ENCODE measurements at regions of chr12 and their contacts with region 1.

Region 1: GRCh38 chr12:12562585-12563261 is at the start of gene DUSP16:
- DNase-seq: peak; percentile 93 to 97 (median 97)
- ATAC-seq: peak; percentile 98
- H3K4me3 ChIP-seq: peak within 1 kb of the TSS; percentile 96
- H3K27ac ChIP-seq: peak within 1 kb of the TSS; percentile 100
- H3K4me1 ChIP-seq: peaks cover 5% of the 10 kb centered on the region
- H3K27me3 ChIP-seq: no peaks in the 10 kb centered on the region
- total RNA-seq, gene DUSP16: 11.1 to 17.2 (median 14.3) TPM

Region 2: DNA sequence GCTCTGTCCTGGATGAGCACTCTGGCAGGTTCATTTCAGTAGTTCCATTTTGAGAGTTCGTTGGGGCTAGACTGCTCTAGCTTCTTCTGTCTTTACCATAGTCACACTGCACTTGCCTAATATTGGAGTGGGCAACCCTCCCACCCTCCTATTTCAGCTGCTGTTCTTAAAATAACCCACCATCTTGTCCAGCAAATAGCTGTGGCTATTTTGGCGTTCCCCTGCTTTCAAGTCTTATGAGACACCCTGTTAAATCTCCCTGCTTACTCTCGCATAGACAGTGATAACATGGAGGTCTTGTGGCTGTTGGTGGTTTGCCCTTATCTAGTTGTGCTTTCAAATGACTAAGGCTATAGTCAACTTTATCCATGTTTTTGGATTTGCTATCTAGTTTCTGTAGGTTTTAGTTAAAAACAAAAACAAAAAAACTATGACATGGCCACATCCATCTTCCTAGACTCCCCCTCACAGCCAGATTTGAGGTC is 361.4 kb before region 1 on chr12:
- intact Hi-C with region 1: no loop called
- DNase-seq: no peak
- ATAC-seq: peak; percentile 36 to 64
- H3K4me3 ChIP-seq: no peak overlapping the region
- H3K27ac ChIP-seq: peak overlapping the region; percentile 36
- H3K4me1 ChIP-seq: peaks cover 1% of the 10 kb centered on the region
- H3K27me3 ChIP-seq: no peaks in the 10 kb centered on the region

Region 3: DNA sequence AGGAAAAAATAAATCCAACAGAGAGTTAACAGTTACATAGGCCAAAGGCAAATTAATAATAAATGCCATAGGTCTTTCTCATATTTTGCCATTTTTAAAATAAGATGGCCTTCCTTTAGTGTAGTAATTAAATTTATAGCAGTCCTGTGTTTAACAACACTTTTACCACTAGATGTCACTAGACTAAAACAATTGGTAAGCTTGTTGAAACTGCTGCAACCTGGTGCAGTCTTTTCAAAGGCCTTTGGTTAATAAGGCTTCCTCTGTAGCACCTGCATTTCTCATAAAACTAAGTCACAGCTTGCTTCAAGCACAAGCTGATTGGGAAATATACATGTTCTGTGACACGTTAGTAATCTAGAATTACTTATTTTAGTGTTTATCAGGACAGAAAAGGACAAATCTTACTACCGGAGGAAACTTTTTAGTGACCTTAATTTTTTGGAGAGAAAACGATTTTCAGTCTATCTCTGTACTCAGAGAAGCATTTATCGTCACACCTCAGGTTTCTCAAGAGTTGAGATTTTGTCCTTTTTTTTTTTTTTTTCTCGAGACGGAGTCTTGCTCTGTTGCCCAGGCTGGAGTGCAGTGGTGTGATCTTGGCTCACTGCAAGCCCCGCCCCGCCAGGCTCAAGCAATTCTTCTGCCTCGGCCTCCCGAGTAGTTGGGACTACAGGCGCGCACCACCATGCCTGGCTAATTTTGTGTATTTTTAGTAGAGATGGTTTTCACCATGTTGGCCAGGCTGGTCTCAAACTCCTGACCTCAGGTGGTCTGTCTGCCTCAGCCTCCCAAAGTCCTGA is 185.9 kb before region 1 on chr12:
- intact Hi-C with region 1: loop called in 3 of 4 experiments (anchors 2 to 5 kb)
- DNase-seq: no peak
- ATAC-seq: peak; percentile 79
- H3K4me3 ChIP-seq: no peak overlapping the region
- H3K27ac ChIP-seq: no peak overlapping the region
- H3K4me1 ChIP-seq: no peaks in the 10 kb centered on the region
- H3K27me3 ChIP-seq: no peaks in the 10 kb centered on the region

Region 4: GRCh38 chr12:12398026-12398859 is 164.5 kb before region 1 on chr12:
- intact Hi-C with region 1: loop called in 1 of 4 experiments (anchors 10 kb)
- DNase-seq: peak; percentile 66 to 79 (median 75)
- ATAC-seq: peak; percentile 94 to 96
- H3K4me3 ChIP-seq: no peak overlapping the region
- H3K27ac ChIP-seq: peak overlapping the region; percentile 20
- H3K4me1 ChIP-seq: no peaks in the 10 kb centered on the region
- H3K27me3 ChIP-seq: no peaks in the 10 kb centered on the region

Region 5: DNA sequence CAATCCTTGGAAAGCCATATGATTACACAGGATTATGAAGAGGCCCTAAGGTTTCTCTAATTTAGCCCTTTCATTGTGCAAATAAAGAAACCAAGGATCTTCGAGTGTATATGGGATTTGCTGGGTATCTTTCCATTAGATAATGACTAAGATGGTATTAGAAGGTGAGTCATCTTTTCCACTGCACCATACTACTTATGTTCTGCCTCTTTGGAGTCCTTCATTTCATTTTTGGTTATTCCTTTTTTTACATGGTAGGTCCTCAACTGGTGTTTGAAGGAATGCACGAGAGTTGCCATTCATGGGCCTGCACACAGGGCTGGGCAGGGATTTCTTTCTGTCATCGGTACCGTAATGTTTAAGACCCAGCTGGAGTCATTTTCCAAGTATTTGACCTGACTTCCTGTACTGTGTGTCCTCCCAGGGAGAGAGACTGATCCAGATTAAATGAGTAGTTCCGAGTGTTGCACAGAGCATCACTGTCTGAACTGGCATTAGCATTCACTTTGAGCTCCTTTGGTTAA is 120.1 kb before region 1 on chr12:
- intact Hi-C with region 1: loop called in 1 of 4 experiments (anchors 5 kb)
- DNase-seq: no peak
- ATAC-seq: peak; percentile 67 to 86
- H3K4me3 ChIP-seq: no peak overlapping the region
- H3K27ac ChIP-seq: peak overlapping the region; percentile 56
- H3K4me1 ChIP-seq: peaks cover 16% of the 10 kb centered on the region
- H3K27me3 ChIP-seq: no peaks in the 10 kb centered on the region

Region 6: GRCh38 chr12:12486661-12487240 is 76.0 kb before region 1 on chr12:
- intact Hi-C with region 1: no loop called
- DNase-seq: no peak
- ATAC-seq: no peak
- H3K4me3 ChIP-seq: no peak overlapping the region
- H3K27ac ChIP-seq: no peak overlapping the region
- H3K4me1 ChIP-seq: no peaks in the 10 kb centered on the region
- H3K27me3 ChIP-seq: no peaks in the 10 kb centered on the region

Region 7: GRCh38 chr12:12505544-12506495 is 56.9 kb before region 1 on chr12:
- intact Hi-C with region 1: loop called in 1 of 4 experiments (anchors 5 kb)
- DNase-seq: no peak
- ATAC-seq: peak; percentile 78 to 89
- H3K4me3 ChIP-seq: peak overlapping the region; percentile 3
- H3K27ac ChIP-seq: peak overlapping the region; percentile 30
- H3K4me1 ChIP-seq: peaks cover 4% of the 10 kb centered on the region
- H3K27me3 ChIP-seq: no peaks in the 10 kb centered on the region

Region 8: DNA sequence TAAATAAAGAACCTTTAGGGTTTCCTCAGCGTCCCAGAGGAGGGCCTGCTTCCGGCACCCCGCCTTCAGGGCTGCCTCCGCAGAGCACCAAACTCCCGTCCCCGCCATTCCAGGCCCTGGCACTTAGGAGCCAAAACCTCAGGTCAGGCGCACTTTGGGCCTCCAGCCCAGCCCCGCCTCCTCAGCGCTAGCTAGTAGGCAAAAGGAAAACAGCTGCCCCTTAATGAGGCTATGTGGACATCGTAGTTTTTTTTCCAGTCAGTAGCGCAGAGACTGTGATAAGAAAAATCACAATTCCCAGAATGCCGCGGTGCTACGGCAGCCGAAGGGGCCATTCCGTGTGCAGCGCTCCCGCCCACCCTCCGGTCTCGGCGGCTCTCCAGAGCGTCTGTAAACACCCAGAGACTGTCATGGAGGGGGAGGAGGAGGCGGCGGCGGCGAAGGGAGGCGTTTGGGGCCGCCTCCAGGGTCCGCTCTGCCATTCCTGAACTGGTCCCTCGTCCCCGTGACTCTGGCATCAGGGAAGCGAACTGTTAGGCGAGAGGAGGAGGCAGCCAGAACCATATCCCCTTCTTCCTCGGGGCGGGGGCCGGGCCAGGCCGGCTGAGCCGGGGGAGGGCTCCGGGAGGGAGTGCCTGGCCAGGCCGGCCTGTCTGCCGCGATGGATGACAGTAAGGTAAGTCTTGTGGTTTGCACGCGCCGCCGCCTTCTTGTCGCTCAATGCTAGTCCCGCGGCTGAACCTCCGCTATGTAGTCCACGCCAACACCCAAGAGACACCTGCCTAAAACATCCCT is 49.0 kb after region 1 on chr12 and contains the start of gene CREBL2:
- intact Hi-C with region 1: no loop called
- DNase-seq: peak; percentile 97 to 99 (median 99)
- ATAC-seq: peak; percentile 97 to 98
- H3K4me3 ChIP-seq: peak within 1 kb of the TSS; percentile 65
- H3K27ac ChIP-seq: peak within 1 kb of the TSS; percentile 90
- H3K4me1 ChIP-seq: peaks cover 3% of the 10 kb centered on the region
- H3K27me3 ChIP-seq: no peaks in the 10 kb centered on the region
- total RNA-seq, gene CREBL2: 22.4 to 24.9 (median 23.4) TPM

Region 9: GRCh38 chr12:12704593-12705230 is 142.0 kb after region 1 on chr12:
- intact Hi-C with region 1: loop called in 1 of 4 experiments (anchors 10 kb)
- DNase-seq: peak; percentile 22 to 71 (median 64)
- ATAC-seq: peak; percentile 98
- H3K4me3 ChIP-seq: no peak overlapping the region
- H3K27ac ChIP-seq: no peak overlapping the region
- H3K4me1 ChIP-seq: no peaks in the 10 kb centered on the region
- H3K27me3 ChIP-seq: no peaks in the 10 kb centered on the region

Measured in right cardiac atrium (tissue), 5 donors.